ENCODE measurements at regions of chr5 and their contacts with region 1.

Region 1: DNA sequence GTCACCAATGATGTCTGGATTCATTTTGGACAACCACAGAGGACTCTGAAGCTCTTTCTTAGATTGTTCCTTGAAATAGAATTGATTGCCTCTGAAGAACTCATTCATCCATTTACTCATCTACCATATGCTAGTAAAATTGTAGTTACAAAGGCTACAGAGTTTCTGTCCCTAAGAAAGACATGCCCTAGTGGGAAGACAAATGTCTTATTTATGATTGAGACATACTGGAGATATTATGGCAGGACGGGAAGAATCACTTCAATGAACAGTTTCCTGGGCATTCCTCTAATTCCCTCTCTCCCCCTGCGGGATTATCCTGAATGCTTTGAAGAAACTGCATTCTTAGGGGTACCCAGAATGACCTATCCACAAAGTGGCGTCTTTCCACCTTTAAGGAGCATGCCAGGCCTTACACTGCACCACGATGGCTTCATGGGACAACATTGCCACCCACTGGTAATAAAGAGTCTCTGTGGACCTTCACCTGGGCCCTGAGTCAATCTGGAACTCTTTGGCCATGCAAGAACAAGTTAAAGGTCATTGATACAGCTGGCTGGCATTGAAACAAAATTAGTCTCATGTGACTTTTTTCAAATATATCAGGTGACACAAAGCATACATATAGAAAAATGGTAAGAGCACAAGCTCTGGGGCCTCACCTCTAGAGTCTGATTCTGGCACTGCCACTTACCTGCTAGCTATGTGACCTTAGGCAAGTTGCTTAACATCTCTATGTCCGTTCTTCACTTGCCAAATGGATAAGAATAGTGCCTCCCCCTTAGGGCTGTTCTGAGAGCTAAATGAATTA is 32.1 kb downstream of the ANKRD55 start:
- DNase-seq: peak; percentile 24
- H3K4me3 ChIP-seq: no peak overlapping the region
- H3K27ac ChIP-seq: no peak overlapping the region
- H3K4me1 ChIP-seq: peaks cover 6% of the 10 kb centered on the region
- H3K27me3 ChIP-seq: no peaks in the 10 kb centered on the region
- CTCF ChIP-seq: peak; percentile 91

Region 2: DNA sequence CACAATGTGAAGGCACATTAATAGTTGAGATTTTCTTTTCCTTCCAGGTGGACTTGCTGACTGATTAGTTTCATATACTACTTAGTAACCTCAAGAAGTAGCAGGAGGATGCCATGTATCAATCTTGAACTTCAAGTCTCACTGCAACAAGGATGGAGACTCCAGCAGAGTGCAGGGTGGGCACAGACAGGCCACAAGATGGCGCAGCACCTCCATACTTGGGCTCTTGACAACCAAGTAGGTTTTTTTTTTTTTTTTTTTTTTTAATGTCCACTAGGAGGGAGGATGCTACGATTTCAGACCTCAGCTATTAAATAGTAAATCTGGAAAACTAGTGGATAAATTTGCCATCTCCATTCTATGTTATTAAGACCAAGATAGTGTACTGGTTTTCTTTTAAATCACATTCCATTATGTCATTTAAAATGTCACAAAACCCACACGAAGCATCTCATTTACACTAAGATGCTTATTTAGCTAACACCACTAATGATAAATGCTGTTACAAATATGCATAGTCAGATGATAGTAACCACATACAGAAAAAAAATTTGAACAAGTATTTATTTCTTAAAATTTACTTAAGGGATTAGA is 264.9 kb before region 1 on chr5:
- intact Hi-C with region 1: loop called (anchors 10 kb)
- DNase-seq: peak; percentile 82
- H3K4me3 ChIP-seq: no peak overlapping the region
- H3K27ac ChIP-seq: no peak overlapping the region
- H3K4me1 ChIP-seq: peaks cover 9% of the 10 kb centered on the region
- H3K27me3 ChIP-seq: no peaks in the 10 kb centered on the region
- CTCF ChIP-seq: peak; percentile 90

Region 3: GRCh38 chr5:55969956-55970355 is 231.1 kb before region 1 on chr5:
- intact Hi-C with region 1: loop called (anchors 10 kb)
- DNase-seq: no peak
- H3K4me3 ChIP-seq: no peak overlapping the region
- H3K27ac ChIP-seq: no peak overlapping the region
- H3K4me1 ChIP-seq: peaks cover 47% of the 10 kb centered on the region
- H3K27me3 ChIP-seq: no peaks in the 10 kb centered on the region
- CTCF ChIP-seq: no peak

Region 4: DNA sequence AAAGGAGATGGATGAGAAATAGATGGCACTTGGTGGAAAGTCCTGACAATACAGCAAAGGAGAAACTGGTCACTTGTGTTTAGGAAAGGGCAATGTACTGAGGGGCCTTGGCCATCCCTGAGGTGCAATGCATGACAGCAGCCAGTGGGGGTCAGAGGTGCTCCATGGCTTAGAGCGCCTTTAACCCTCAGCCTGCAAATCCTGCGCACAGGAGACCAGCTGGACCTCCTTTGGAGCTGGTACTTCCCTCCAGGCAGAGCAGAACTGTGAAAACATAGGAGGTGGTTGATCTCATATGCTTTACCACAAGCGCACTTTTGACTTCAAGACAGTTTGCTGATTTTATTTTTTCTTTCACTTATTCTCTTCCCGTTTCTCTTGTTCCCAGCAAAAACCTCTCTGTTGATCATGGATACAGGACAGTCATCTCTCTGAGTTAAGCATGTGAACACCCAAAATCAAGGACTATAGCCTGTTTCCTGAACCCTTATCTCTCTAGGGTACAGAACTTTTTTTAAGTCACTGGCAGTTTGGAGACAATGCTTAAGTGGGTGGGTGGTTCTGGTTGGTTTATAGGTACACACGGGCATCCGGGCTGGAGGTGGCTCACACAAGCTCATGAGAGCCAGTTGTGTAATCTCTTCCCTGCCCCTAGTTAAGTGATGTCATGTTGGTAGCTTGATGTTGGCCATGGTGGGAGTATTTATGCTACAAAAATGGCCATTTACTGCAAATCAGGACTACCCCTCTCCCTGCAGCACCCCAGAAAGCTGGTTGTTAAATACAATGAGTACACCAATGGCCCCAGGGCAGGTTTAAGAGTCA is 69.7 kb after region 1 on chr5:
- intact Hi-C with region 1: no loop called
- DNase-seq: peak; percentile 78
- H3K4me3 ChIP-seq: no peak overlapping the region
- H3K27ac ChIP-seq: no peak overlapping the region
- H3K4me1 ChIP-seq: peaks cover 13% of the 10 kb centered on the region
- H3K27me3 ChIP-seq: peaks cover 3% of the 10 kb centered on the region
- CTCF ChIP-seq: peak; percentile 99

Region 5: GRCh38 chr5:56286015-56286884 is 85.2 kb after region 1 on chr5:
- intact Hi-C with region 1: no loop called
- DNase-seq: no peak
- H3K4me3 ChIP-seq: no peak overlapping the region
- H3K27ac ChIP-seq: no peak overlapping the region
- H3K4me1 ChIP-seq: peaks cover 19% of the 10 kb centered on the region
- H3K27me3 ChIP-seq: no peaks in the 10 kb centered on the region
- CTCF ChIP-seq: no peak